ENCODE measurements at regions of chr6 and their contacts with region 1.

Region 1: DNA sequence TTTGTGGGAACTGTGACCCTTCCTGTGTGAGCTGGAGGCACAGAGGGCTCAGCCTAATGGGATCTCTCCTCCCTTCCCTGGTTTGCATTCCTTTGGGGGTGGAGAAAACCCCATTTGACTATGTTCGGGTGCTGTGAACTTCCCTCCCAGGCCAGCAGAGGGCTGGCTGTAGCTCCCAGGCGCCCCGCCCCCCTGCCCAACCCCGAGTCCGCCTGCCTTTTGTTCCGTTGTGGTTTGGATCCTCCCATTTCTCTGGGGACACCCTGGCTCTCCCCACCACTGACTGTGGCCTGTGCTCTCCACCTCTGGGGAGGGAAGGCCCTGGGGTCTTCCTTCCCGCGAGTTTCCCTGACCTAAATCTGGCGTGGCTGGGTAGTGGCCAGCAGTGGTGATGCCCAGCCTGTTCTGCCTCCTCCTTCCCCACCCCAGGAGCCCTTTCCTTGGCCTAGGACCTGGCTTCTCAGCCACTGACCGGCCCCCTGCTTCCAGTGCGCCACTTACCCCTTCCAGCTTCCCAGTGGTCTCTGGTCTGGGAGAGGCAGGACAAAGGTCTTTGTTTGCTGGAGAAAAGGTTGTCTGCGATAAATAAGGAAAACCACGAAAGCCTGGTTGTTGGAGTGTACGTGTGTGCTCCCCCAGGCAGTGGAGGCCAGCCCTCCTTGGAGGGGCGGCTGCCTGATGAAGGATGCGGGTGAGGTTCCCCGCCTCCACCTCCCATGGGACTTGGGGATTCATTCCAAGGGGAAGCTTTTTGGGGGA is 4.9 kb downstream of the VEGFA start:
- DNase-seq: peak; percentile 84
- ATAC-seq: peak; percentile 7

Region 2: GRCh38 chr6:43657221-43657802 is 117.6 kb before region 1 on chr6:
- intact Hi-C with region 1: no loop called
- DNase-seq: no peak
- ATAC-seq: no peak

Region 3: DNA sequence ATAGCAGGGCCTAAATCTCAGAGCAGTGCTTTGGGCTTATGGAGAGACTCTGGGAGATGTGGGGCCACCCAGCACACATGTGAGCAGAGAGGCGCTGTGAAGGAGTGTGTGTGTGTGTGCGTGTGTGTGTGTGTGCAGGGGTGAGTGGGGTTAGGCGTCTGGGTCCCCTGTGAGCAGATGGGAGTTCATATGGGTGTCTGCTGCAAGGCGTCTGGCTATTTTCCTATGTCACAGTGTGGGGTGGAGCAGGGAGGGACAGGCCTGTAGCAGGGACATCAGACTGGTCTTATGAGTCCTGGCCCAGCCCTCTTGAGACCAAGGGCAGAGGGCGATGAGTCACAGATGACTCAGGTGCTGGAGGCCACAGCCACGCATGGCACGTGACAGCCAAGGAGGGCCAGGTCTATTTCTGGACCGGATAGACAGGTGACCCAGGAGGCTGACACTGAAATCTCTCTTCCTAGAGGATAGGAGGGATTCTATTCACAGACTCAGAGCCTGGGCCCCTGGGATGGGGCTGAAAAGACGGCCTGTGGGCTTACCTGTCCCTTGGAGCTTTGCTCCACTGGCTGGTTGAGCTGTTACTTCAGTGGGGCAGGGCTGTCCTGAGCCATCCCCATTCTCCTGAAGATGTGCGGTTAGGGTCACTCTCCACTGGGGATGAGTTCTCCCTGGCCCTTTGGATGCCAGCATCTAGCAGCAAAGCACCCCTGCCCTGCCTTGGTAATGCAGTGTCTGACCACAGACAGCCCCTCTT is 23.9 kb after region 1 on chr6:
- intact Hi-C with region 1: loop called (anchors 2 kb)
- DNase-seq: peak; percentile 78
- ATAC-seq: peak; percentile 64

Region 4: DNA sequence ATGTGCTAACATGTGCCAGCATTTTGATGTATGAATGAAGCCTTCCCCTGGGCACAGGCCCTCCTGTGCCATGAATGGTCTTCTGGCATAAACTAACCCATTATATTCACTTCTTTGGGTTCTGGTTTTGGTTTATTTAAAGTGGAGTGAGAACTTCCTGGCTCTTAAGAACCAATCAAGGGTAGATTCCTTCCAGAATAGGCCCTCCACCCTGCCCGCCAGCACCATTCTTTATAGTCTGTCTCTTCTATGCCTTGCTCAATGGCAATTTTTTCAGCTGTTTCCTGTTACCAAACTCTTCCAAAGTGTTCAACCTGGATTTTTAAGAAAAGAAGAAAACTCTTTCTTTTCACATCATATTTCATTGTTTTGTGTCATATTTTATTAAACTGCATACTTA is 39.2 kb after region 1 on chr6:
- intact Hi-C with region 1: loop called (anchors 2 kb)
- DNase-seq: no peak
- ATAC-seq: no peak